HEK293 (cell line): ENCODE measurements at regions of chr17 and their contacts with region 1.

Region 1: DNA sequence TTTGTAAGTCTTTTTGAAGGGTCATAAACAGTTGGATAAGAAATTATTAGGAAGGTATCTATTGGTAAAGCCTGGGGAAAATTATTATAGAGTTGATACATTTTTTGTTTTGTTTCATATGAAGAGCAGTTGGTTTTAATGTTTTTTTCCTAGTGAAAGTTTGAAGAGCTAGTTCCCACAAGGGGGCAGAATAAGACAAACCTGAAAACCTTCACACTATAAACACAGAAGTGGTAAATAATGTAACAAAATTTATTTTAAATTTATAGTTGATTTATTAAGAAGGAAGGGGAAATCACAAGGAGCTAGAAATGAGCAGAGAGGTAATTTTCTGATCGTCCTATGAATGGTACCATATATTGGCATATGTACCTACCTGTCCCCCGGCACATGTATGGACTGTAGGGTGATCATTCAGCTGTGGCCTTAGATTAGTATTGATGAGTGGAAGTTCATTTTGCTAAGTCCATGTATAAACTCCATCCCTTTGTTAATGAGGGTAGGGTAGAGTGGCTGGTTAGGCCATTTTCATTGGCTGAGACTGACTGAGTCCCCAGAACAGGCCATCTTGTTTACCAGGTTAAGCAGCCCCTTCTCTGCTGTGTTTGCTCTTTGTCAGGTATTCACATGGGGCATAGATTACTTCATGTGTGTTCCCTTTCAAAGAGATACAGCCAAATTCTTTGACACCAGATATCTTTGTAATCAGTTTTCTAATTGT is 116.4 kb downstream of the TANC2 start:
- H3K4me3 ChIP-seq: no peak overlapping the region
- H3K27ac ChIP-seq: no peak overlapping the region
- H3K4me1 ChIP-seq: no peaks in the 10 kb centered on the region
- CTCF ChIP-seq: no peak

Region 2: GRCh38 chr17:62720089-62720833 is 362.2 kb before region 1 on chr17:
- CTCF ChIA-PET with region 1: no interaction called
- POLR2A ChIA-PET with region 1: no interaction called
- H3K4me3 ChIP-seq: no peak overlapping the region
- H3K27ac ChIP-seq: no peak overlapping the region
- H3K4me1 ChIP-seq: peaks cover 4% of the 10 kb centered on the region; the same call in 1 of the 2 replicates
- CTCF ChIP-seq: no peak

Region 3: GRCh38 chr17:63096426-63096825 is 14.0 kb after region 1 on chr17:
- CTCF ChIA-PET with region 1: interaction called, 11 read pairs
- POLR2A ChIA-PET with region 1: no interaction called
- H3K4me3 ChIP-seq: no peak overlapping the region
- H3K27ac ChIP-seq: no peak overlapping the region
- H3K4me1 ChIP-seq: peaks cover 4% of the 10 kb centered on the region; the same call in 1 of the 2 replicates
- CTCF ChIP-seq: no peak

Region 4: GRCh38 chr17:63150994-63151464 is 68.6 kb after region 1 on chr17:
- CTCF ChIA-PET with region 1: no interaction called
- POLR2A ChIA-PET with region 1: no interaction called
- H3K4me3 ChIP-seq: no peak overlapping the region
- H3K27ac ChIP-seq: no peak overlapping the region
- H3K4me1 ChIP-seq: peaks cover 42% of the 10 kb centered on the region
- CTCF ChIP-seq: no peak